ENCODE measurements at regions of chr3 and their contacts with region 1.

Region 1: GRCh38 chr3:14921078-14921616 is 26.2 kb upstream of the NR2C2 start:
- DNase-seq: peak; percentile 68
- ATAC-seq: peak; percentile 90
- H3K4me3 ChIP-seq: no peak overlapping the region; a peak in 1 of 6 replicates
- H3K27ac ChIP-seq: no peak overlapping the region
- H3K4me1 ChIP-seq: peaks cover 6% of the 10 kb centered on the region; the same call in 1 of the 2 replicates
- H3K27me3 ChIP-seq: peaks cover 0 to 42% of the 10 kb centered on the region in 2 experiments; a peak in 2 of 5 replicates
- CTCF ChIP-seq: peak; percentile 99
- EP300 ChIP-seq: no peak
- POLR2A ChIP-seq: no peak
- RAD21 ChIP-seq: peak; percentile 96

Region 2: DNA sequence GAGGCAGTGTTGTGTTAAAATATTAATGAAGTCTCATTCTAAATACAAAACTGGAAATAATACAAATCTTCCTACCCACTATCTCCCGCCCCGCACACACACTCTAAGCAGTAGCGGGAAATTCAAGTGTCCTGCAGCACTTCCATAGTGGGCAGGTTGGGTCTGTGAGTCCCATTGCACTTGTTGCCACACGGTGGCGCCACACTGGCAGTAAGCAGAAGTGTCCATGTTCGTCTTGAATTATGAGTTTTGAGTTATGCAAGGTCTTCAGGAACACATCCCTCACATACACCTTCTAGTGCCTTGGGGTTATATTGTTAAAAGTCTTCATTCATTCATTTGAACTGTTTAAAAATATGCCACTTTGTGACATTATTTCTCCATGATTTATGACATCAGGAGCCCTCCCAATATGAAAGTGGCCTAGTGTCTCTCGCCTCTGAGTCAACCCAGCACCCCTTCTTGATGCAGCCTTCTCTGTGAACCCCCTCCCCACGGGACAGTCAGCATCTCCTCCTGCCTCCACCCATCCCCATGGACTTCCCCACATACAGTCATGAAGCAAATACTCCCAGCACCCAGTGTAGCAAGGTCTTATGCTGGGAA is 287.2 kb before region 1 on chr3:
- CTCF ChIA-PET with region 1: interaction called, 8 read pairs
- POLR2A ChIA-PET with region 1: no interaction called
- in situ Hi-C with region 1: no loop called
- intact Hi-C with region 1: loop called (anchors 5 kb)
- DNase-seq: peak; percentile 53
- ATAC-seq: peak; percentile 58
- H3K4me3 ChIP-seq: no peak overlapping the region
- H3K27ac ChIP-seq: no peak overlapping the region
- H3K4me1 ChIP-seq: peaks cover 57% of the 10 kb centered on the region
- H3K27me3 ChIP-seq: peaks cover 0 to 3% of the 10 kb centered on the region in 2 experiments; a peak in 1 of 5 replicates
- CTCF ChIP-seq: peak; percentile 72
- EP300 ChIP-seq: no peak
- POLR2A ChIP-seq: no peak
- RAD21 ChIP-seq: no peak

Region 3: DNA sequence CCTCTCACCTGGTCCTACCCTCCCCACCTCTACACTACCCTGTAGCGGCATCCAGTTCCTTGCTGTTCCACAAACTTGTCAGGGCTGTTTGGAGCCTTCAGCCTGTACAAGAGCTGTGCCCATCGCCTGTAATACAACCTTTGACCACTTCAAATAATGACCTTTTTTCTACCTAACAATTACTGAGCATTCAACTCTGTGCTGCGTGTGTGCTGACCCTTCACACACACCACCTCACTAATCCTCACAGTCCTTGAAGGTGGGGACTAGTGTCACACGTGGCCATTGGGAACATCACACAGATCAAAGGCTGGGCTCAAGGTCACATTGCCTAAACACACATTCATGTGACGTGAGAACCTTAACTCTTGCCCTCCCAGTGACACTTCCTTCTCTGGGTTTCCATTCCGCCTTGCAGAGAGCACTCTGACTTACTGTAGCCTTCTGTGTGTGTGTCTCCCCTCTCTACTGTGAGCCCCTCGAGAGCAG is 243.1 kb before region 1 on chr3:
- CTCF ChIA-PET with region 1: interaction called, 24 read pairs
- POLR2A ChIA-PET with region 1: no interaction called
- in situ Hi-C with region 1: loop called (anchors 5 kb)
- intact Hi-C with region 1: loop called (anchors 1 kb)
- DNase-seq: peak; percentile 96
- ATAC-seq: peak; percentile 96
- H3K4me3 ChIP-seq: 0 out of 6 replicates have a peak overlapping the region, but pooled peaks of 1 of the 3 experiments have one; percentile 17
- H3K27ac ChIP-seq: peak overlapping the region; percentile 82
- H3K4me1 ChIP-seq: peaks cover 59% of the 10 kb centered on the region
- H3K27me3 ChIP-seq: no peaks in the 10 kb centered on the region
- CTCF ChIP-seq: peak; percentile 20; the same call in 1 of the 2 replicates
- EP300 ChIP-seq: peak; percentile 73 to 91; a peak in 3 of 4 replicates
- POLR2A ChIP-seq: no peak
- RAD21 ChIP-seq: peak; percentile 28; the same call in 1 of the 2 replicates

Region 4: DNA sequence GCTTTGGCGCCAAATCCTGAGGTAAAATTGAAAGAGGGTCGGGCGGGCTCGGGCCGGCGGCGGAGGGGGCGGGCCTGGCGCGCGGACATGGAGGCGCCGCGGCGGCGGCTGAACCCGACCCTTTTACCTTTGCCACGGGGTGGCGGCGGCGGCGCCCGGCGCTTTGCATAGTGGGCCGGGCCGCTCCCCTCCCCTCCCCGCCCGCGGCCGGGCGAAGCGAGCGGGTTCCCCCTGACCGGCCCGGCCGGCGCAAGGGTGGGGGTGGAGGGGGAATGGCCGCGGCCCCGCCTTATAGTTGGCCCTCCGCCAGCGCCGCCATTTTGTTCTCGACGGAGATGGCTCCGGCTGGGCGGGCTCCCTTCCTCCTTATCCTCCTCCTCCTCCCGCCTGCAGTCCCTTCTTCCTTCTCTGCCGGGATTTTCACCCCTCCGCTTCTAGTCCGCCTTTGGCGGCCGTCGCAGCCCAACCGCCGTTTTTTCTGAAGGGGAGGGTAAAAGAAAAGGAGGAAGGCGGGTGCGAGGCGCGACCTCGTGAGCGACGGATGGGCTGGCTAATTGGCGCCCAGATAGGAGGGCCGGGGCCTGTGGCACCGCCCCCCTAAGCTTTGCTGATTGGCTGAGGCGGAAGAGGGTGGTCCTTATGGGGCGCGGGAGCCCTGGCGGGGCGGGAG is 26.9 kb after region 1 on chr3:
- CTCF ChIA-PET with region 1: no interaction called
- POLR2A ChIA-PET with region 1: interaction called, 3 read pairs
- in situ Hi-C with region 1: no loop called
- intact Hi-C with region 1: loop called (anchors 2 kb)
- DNase-seq: peak; percentile 89
- ATAC-seq: peak; percentile 96
- H3K4me3 ChIP-seq: peak overlapping the region; percentile 79 to 97 (median 95); a peak in 5 of 6 replicates
- H3K27ac ChIP-seq: peak overlapping the region; percentile 91
- H3K4me1 ChIP-seq: peaks cover 50% of the 10 kb centered on the region
- H3K27me3 ChIP-seq: no peaks in the 10 kb centered on the region
- CTCF ChIP-seq: no peak
- EP300 ChIP-seq: 0 out of 4 replicates have a peak, but pooled peaks of 1 of the 2 experiments have one; percentile 11
- POLR2A ChIP-seq: peak; percentile 5 to 48
- RAD21 ChIP-seq: no peak

Region 5: DNA sequence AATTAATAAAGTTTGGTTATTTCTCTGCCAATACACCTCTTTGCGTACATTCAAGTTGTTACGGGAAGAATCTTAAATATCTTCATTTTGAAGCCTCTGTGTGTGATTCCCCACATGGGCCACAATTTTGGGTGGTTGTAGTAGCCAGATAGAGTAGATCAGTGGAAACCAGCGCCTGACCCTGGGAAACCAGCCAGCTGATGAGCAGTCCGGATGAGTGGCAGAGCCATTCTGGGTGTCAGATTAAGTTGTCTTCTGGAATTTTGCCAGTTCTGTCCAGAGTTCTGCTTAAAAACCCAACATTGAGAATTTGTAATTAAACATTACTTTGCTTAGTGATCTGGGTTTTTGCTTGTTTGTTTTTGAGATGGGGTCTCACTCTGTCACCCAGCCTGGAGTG is 94.3 kb after region 1 on chr3:
- CTCF ChIA-PET with region 1: no interaction called
- POLR2A ChIA-PET with region 1: no interaction called
- in situ Hi-C with region 1: no loop called
- intact Hi-C with region 1: no loop called
- DNase-seq: no peak
- ATAC-seq: no peak
- H3K4me3 ChIP-seq: no peak overlapping the region
- H3K27ac ChIP-seq: no peak overlapping the region
- H3K4me1 ChIP-seq: no peaks in the 10 kb centered on the region
- H3K27me3 ChIP-seq: no peaks in the 10 kb centered on the region
- CTCF ChIP-seq: no peak
- EP300 ChIP-seq: no peak
- POLR2A ChIP-seq: no peak
- RAD21 ChIP-seq: no peak

Region 6: GRCh38 chr3:15042936-15043335 is 121.8 kb after region 1 on chr3:
- CTCF ChIA-PET with region 1: no interaction called
- POLR2A ChIA-PET with region 1: no interaction called
- in situ Hi-C with region 1: loop called (anchors 10 kb)
- intact Hi-C with region 1: loop called (anchors 5 kb)
- DNase-seq: no peak
- ATAC-seq: no peak
- H3K4me3 ChIP-seq: no peak overlapping the region
- H3K27ac ChIP-seq: no peak overlapping the region
- H3K4me1 ChIP-seq: no peaks in the 10 kb centered on the region
- H3K27me3 ChIP-seq: no peaks in the 10 kb centered on the region; a peak in 1 of 5 replicates
- CTCF ChIP-seq: no peak
- EP300 ChIP-seq: no peak
- POLR2A ChIP-seq: no peak
- RAD21 ChIP-seq: no peak

Region 7: GRCh38 chr3:16448639-16449070 is 1527.5 kb after region 1 on chr3:
- CTCF ChIA-PET with region 1: no interaction called
- POLR2A ChIA-PET with region 1: no interaction called
- in situ Hi-C with region 1: no loop called
- intact Hi-C with region 1: no loop called
- DNase-seq: no peak
- ATAC-seq: no peak
- H3K4me3 ChIP-seq: no peak overlapping the region
- H3K27ac ChIP-seq: no peak overlapping the region
- H3K4me1 ChIP-seq: no peaks in the 10 kb centered on the region
- H3K27me3 ChIP-seq: peaks cover 0 to 19% of the 10 kb centered on the region in 2 experiments; a peak in 1 of 5 replicates
- CTCF ChIP-seq: no peak
- EP300 ChIP-seq: no peak
- POLR2A ChIP-seq: no peak
- RAD21 ChIP-seq: no peak